Astrocyte of the cerebellum (primary cell): ENCODE measurements at regions of chr5 and their contacts with region 1.

Region 1: GRCh38 chr5:55232985-55233928 is at the start of gene CCNO:
- DNase-seq: peak; percentile 34
- H3K4me3 ChIP-seq: peak within 1 kb of the TSS; percentile 47
- CTCF ChIP-seq: peak; percentile 4

Region 2: DNA sequence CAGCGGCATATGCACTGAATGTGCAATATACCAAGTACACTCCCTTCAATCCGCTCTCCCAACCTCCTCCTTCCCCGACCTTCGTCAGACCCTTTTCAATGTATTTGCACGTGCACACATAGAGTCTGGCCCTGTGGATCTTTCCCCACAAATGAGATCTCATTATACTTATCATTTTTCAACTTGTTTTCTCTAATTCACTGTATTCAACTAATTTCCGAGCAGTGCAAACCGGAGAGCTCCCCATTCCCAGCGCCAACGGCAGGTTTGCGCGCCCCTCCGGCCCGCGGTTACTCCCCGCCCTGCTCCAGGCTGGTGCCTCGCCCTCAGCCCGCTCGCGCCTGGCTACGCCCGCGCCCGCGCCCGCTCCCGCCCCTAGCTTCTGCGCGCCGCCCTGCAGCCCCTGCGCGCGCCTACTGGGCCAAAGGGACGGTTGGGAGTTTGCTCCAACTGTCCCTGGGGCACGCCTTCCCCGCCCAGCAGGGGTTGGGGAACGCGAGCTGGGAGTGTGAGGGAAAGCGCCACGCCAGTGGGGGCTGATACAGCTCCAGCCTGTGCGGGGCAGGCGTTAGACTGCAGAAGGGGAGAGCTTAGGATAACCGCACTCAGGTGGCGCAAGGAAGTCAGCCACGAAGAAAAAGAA is 57.0 kb before region 1 on chr5:
- in situ Hi-C with region 1: loop called (anchors 5 kb)
- DNase-seq: no peak
- H3K4me3 ChIP-seq: peak overlapping the region; percentile 31
- CTCF ChIP-seq: peak; percentile 10

Region 3: GRCh38 chr5:55418994-55419968 is 186.0 kb after region 1 on chr5:
- in situ Hi-C with region 1: no loop called
- DNase-seq: peak; percentile 54
- H3K4me3 ChIP-seq: no peak overlapping the region
- CTCF ChIP-seq: no peak